K562 (cell line): ENCODE measurements at regions of chr1 and their contacts with region 1.

Region 1: DNA sequence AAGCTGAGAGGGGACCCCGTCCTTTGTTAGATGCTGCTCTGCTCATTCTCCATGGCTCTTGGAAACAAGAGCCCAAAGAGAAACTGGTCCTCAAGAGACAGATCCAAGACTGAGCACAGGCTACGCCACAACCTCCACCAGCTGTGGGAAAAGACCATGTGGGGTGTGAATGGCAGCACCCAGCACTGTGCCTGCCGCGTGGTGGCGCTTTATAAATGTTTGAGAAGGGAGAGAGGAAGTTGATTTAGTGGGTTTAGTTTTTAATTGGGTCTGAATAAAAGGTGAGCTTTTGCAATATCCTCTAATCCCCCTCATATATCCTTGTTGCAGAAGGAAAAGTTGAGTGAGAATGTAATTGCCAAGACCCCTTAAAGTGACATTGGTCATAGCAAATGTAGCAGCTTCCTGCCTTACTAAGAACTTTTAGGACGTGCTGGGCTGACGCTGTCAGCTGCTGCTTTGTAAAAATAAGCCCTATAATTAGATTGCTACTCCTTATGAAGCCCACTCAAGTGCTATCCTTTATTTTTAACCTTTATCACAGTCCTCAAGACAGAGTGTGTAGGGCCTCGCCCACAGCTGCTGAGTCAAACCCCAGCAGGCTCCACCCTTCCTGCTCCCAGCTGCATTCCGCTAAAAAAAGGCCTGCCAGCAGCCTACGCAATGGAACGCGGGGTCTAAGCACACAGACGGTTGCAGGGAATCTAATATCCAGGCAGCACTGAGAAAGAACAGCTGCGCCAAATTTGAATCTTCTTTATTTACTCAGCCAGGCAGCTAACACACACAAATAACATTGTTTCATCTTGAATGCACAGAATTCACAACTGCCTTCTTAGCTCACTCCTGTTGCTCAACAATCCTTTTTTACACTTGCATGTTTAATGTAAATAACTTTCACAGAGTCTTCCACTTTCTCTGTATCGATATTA is 47.4 kb upstream of the PRDX6 start:
- DNase-seq: peak; percentile 78 to 96 (median 83)
- ATAC-seq: peak; percentile 94
- H3K4me3 ChIP-seq: peak overlapping the region; percentile 5; the same call in 1 of the 2 replicates
- H3K27ac ChIP-seq: peak overlapping the region; percentile 89
- H3K4me1 ChIP-seq: peaks cover 19 to 63% of the 10 kb centered on the region in 2 experiments; a peak in 4 of 5 replicates
- H3K27me3 ChIP-seq: no peaks in the 10 kb centered on the region
- CTCF ChIP-seq: peak; percentile 70 to 94 (median 82)
- EP300 ChIP-seq: peak; percentile 64; the same call in 1 of the 2 replicates
- POLR2A ChIP-seq: peak; percentile 58
- RAD21 ChIP-seq: peak; percentile 55 to 75

Region 2: DNA sequence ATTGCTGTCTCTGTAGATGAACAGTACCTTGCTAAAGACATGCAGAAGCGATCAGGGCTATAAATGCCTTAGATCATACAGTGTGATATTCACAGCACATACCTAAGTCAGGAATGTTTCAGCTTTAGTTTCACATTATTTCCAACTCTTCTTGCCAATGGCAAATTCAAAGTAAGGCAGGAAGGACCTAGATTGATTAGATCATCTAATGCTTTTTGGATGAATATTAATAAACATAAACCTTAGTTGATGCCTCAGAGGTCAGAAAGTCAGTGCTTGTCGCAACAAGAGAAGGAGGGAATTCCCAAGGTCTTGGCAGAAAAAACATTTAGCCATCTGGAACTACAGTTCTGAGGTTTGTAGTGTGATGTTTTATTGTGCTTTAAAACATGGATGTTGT is 501.3 kb before region 1 on chr1:
- CTCF ChIA-PET with region 1: no interaction called
- POLR2A ChIA-PET with region 1: no interaction called
- in situ Hi-C with region 1: no loop called
- intact Hi-C with region 1: no loop called
- DNase-seq: no peak
- ATAC-seq: no peak
- H3K4me3 ChIP-seq: no peak overlapping the region
- H3K27ac ChIP-seq: no peak overlapping the region
- H3K4me1 ChIP-seq: peaks cover 2 to 22% of the 10 kb centered on the region in 2 experiments; a peak in 4 of 5 replicates
- H3K27me3 ChIP-seq: no peaks in the 10 kb centered on the region
- CTCF ChIP-seq: no peak
- EP300 ChIP-seq: no peak
- POLR2A ChIP-seq: no peak
- RAD21 ChIP-seq: no peak

Region 3: GRCh38 chr1:173100476-173101107 is 329.1 kb before region 1 on chr1:
- CTCF ChIA-PET with region 1: no interaction called
- POLR2A ChIA-PET with region 1: no interaction called
- in situ Hi-C with region 1: no loop called
- intact Hi-C with region 1: no loop called
- DNase-seq: no peak
- ATAC-seq: no peak
- H3K4me3 ChIP-seq: no peak overlapping the region
- H3K27ac ChIP-seq: no peak overlapping the region
- H3K4me1 ChIP-seq: no peaks in the 10 kb centered on the region
- H3K27me3 ChIP-seq: peaks cover 0 to 6% of the 10 kb centered on the region in 2 experiments; a peak in 1 of 5 replicates
- CTCF ChIP-seq: no peak
- EP300 ChIP-seq: no peak
- POLR2A ChIP-seq: no peak
- RAD21 ChIP-seq: no peak

Region 4: GRCh38 chr1:173453982-173454381 is 24.2 kb after region 1 on chr1:
- CTCF ChIA-PET with region 1: no interaction called
- POLR2A ChIA-PET with region 1: no interaction called
- in situ Hi-C with region 1: no loop called
- intact Hi-C with region 1: no loop called
- DNase-seq: no peak
- ATAC-seq: no peak
- H3K4me3 ChIP-seq: no peak overlapping the region
- H3K27ac ChIP-seq: no peak overlapping the region
- H3K4me1 ChIP-seq: no peaks in the 10 kb centered on the region
- H3K27me3 ChIP-seq: no peaks in the 10 kb centered on the region
- CTCF ChIP-seq: no peak
- EP300 ChIP-seq: no peak
- POLR2A ChIP-seq: no peak
- RAD21 ChIP-seq: no peak

Region 5: DNA sequence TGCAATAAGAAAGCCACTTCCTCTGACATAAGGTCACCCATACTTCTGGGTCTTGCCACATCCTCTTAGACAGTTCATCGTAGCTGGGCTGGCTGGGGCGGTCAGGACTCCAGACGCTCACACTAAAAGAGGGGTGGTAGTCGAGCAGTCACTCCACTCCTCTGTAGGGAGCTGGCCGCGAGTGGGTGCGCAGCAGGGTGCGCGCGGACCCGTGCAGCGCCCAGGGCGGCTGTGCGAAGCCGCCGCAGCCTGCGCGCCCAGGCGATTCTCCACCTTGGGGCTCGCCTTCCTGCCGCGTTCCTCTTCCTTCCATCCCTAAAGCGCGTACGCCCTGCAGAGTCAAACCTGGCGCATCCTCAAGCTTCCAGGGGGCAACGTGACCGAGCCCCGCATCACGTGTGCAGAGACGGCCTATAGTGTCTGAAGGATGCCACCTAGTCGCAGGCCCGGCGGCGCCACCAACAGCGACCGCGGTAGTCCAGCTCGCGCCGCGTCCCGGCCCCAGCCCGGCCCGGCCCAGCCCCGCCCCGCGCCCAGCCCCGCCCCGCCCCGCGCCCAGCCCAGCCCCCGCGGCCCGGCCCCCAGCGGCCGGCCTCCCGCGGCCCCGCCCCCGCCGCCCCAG is 47.0 kb after region 1 on chr1:
- CTCF ChIA-PET with region 1: no interaction called
- POLR2A ChIA-PET with region 1: interaction called, 8 read pairs
- in situ Hi-C with region 1: no loop called
- intact Hi-C with region 1: loop called (anchors 1 kb)
- DNase-seq: peak; percentile 96 to 97 (median 96)
- ATAC-seq: peak; percentile 90
- H3K4me3 ChIP-seq: peak overlapping the region; percentile 89
- H3K27ac ChIP-seq: peak overlapping the region; percentile 82
- H3K4me1 ChIP-seq: peaks cover 11 to 34% of the 10 kb centered on the region in 2 experiments
- H3K27me3 ChIP-seq: no peaks in the 10 kb centered on the region
- CTCF ChIP-seq: peak in 1 of 3 experiments; percentile 17; a peak in 1 of 6 replicates
- EP300 ChIP-seq: no peak; the same call in 1 of the 2 replicates
- POLR2A ChIP-seq: 0 out of 2 replicates have a peak, but pooled peaks have one; percentile 54
- RAD21 ChIP-seq: peak in 1 of 2 experiments; percentile 32; a peak in 2 of 4 replicates

Region 6: DNA sequence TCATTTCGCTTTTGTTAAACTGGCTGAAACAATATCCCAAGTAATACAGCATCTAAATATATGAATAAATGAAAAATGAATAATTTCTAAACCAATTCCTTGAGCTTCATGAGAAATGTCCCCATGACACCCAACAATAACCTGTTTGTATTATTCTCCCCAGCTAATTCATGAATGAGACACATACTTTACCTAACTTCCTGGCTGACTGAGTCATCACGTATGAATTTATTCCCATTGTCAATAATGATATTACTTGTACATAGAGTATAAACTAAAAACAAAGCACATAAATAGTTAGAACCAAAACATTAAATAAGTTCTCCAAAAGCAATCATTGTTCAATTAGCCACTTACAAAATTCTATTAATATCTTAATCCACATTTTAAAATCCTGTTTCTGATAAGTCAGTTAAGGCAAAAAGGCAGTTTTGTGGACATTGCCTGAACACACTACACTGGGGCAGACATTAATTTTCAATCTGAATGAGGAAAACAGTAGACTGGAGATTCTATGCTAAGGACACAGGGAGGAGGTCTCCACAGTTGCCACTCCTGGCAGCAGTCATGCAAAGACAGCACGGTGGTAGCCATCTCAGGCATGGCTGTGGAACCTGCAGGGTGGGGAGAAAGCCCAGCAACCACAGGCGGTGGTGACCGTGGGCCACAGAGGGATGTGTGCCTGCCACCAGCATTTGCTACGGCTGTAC is 125.0 kb after region 1 on chr1:
- CTCF ChIA-PET with region 1: no interaction called
- POLR2A ChIA-PET with region 1: no interaction called
- in situ Hi-C with region 1: no loop called
- intact Hi-C with region 1: loop called (anchors 5 kb)
- DNase-seq: no peak
- ATAC-seq: peak; percentile 33; the same call in 2 of the 3 replicates
- H3K4me3 ChIP-seq: no peak overlapping the region
- H3K27ac ChIP-seq: no peak overlapping the region
- H3K4me1 ChIP-seq: peaks cover 3 to 15% of the 10 kb centered on the region in 2 experiments; a peak in 4 of 5 replicates
- H3K27me3 ChIP-seq: no peaks in the 10 kb centered on the region
- CTCF ChIP-seq: no peak
- EP300 ChIP-seq: no peak
- POLR2A ChIP-seq: no peak
- RAD21 ChIP-seq: no peak

Region 7: GRCh38 chr1:173628888-173629287 is 199.2 kb after region 1 on chr1:
- CTCF ChIA-PET with region 1: no interaction called
- POLR2A ChIA-PET with region 1: no interaction called
- in situ Hi-C with region 1: no loop called
- intact Hi-C with region 1: loop called (anchors 2 kb)
- DNase-seq: no peak
- ATAC-seq: peak; percentile 47; the same call in 1 of the 3 replicates
- H3K4me3 ChIP-seq: no peak overlapping the region
- H3K27ac ChIP-seq: no peak overlapping the region
- H3K4me1 ChIP-seq: no peaks in the 10 kb centered on the region
- H3K27me3 ChIP-seq: no peaks in the 10 kb centered on the region
- CTCF ChIP-seq: peak in 1 of 3 experiments; percentile 44; a peak in 2 of 6 replicates
- EP300 ChIP-seq: no peak
- POLR2A ChIP-seq: no peak
- RAD21 ChIP-seq: peak in 1 of 2 experiments; percentile 70; a peak in 3 of 4 replicates

Region 8: DNA sequence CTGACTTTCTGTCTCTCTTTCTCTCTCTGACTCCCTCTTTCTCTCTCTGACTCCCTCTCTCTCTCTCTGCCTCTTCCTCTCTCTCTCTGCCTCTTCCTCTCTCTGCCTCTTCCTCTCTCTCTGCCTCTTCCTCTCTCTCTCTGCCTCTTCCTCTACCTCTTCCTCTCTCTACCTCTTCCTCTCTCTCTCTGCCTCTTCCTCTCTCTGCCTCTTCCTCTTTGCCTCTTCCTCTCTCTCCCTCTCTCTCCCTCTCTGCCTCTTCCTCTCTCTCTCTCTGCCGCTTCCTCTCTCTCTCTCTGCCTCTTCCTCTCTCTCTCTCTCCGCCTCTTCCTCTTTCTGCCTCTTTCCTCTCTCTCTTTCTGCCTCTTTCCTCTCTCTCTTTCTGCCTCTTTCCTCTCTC is 258.6 kb after region 1 on chr1:
- CTCF ChIA-PET with region 1: no interaction called
- POLR2A ChIA-PET with region 1: no interaction called
- in situ Hi-C with region 1: no loop called
- intact Hi-C with region 1: loop called (anchors 5 kb)
- DNase-seq: no peak
- ATAC-seq: no peak
- H3K4me3 ChIP-seq: no peak overlapping the region
- H3K27ac ChIP-seq: no peak overlapping the region
- H3K4me1 ChIP-seq: peaks cover 7 to 9% of the 10 kb centered on the region in 2 experiments; a peak in 4 of 5 replicates
- H3K27me3 ChIP-seq: no peaks in the 10 kb centered on the region
- CTCF ChIP-seq: no peak
- EP300 ChIP-seq: no peak
- POLR2A ChIP-seq: no peak
- RAD21 ChIP-seq: no peak

Region 9: DNA sequence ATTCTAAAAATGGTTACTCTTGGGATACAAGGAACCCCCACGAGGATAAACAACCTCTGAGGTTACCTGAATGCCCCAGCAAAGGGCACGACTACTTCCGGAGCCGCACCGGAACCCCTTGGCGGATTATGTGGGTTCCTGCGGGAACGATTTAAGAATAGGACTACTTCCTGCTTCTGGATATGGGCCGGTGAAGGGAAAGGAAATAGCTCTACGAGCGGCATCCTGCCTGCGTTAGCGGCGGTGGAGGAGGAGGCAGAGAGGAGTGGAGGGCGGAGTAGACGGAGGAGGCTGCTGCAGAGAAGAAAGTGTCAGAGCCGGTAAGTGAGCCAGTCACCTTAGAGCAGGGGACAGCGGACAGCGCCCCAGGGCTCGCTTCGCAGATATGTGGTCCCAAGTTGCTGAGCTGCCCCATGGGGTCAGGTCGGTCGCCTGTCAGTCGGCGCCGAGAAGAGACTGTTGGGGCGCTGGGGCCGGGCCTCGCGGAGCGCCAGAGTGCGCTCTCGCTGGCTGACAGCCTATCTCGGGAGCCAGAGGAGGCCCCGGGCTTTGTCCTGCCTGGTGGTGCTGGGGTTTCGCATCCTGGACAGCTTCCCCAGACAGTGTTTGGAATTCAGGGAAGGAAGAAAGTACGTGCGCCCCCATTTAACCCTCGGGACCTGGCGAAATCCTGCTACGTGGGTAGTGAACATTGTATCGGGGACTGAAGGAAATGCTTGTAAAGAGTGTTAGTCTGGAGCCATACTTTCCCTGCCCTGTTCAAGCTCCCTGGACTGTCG is 285.2 kb after region 1 on chr1 and contains the start of gene KLHL20:
- CTCF ChIA-PET with region 1: no interaction called
- POLR2A ChIA-PET with region 1: interaction called, 5 read pairs
- in situ Hi-C with region 1: no loop called
- intact Hi-C with region 1: loop called (anchors 2 kb)
- DNase-seq: peak; percentile 72 to 95 (median 82)
- ATAC-seq: peak; percentile 97
- H3K4me3 ChIP-seq: peak within 1 kb of the TSS; percentile 80
- H3K27ac ChIP-seq: peak within 1 kb of the TSS; percentile 82
- H3K4me1 ChIP-seq: no peaks in the 10 kb centered on the region; a peak in 2 of 5 replicates
- H3K27me3 ChIP-seq: no peaks in the 10 kb centered on the region
- CTCF ChIP-seq: peak in 2 of 3 experiments; percentile 14 to 29; a peak in 1 of 6 replicates
- EP300 ChIP-seq: peak; percentile 64
- POLR2A ChIP-seq: peak; percentile 98
- RAD21 ChIP-seq: peak; percentile 20 to 54; a peak in 3 of 4 replicates
- polyA plus RNA-seq, gene KLHL20: 8.9 to 10.3 TPM

Region 10: GRCh38 chr1:173914366-173914871 is 484.7 kb after region 1 on chr1:
- CTCF ChIA-PET with region 1: no interaction called
- POLR2A ChIA-PET with region 1: no interaction called
- in situ Hi-C with region 1: no loop called
- intact Hi-C with region 1: loop called (anchors 5 kb)
- DNase-seq: peak; percentile 74 to 81 (median 76)
- ATAC-seq: peak; percentile 88
- H3K4me3 ChIP-seq: no peak overlapping the region
- H3K27ac ChIP-seq: no peak overlapping the region
- H3K4me1 ChIP-seq: peaks cover 4 to 20% of the 10 kb centered on the region in 2 experiments; a peak in 4 of 5 replicates
- H3K27me3 ChIP-seq: no peaks in the 10 kb centered on the region
- CTCF ChIP-seq: peak; percentile 72 to 93 (median 82)
- EP300 ChIP-seq: 0 out of 2 replicates have a peak, but pooled peaks have one; percentile 15
- POLR2A ChIP-seq: no peak
- RAD21 ChIP-seq: peak; percentile 12 to 61; a peak in 2 of 4 replicates